ENCODE measurements at regions of chr19 and their contacts with region 1.

Region 1: GRCh38 chr19:10288662-10289166 is 1.0 kb upstream of the ICAM5 start:
- DNase-seq: peak; percentile 75 to 85
- ATAC-seq: peak; percentile 62 to 76; a peak in 5 of 6 replicates
- H3K4me3 ChIP-seq: peak overlapping the region; percentile 52
- H3K27ac ChIP-seq: peak overlapping the region; percentile 48 to 81
- H3K4me1 ChIP-seq: peaks cover 16% of the 10 kb centered on the region
- CTCF ChIP-seq: no peak
- EP300 ChIP-seq: no peak
- POLR2A ChIP-seq: no peak
- RAD21 ChIP-seq: no peak

Region 2: DNA sequence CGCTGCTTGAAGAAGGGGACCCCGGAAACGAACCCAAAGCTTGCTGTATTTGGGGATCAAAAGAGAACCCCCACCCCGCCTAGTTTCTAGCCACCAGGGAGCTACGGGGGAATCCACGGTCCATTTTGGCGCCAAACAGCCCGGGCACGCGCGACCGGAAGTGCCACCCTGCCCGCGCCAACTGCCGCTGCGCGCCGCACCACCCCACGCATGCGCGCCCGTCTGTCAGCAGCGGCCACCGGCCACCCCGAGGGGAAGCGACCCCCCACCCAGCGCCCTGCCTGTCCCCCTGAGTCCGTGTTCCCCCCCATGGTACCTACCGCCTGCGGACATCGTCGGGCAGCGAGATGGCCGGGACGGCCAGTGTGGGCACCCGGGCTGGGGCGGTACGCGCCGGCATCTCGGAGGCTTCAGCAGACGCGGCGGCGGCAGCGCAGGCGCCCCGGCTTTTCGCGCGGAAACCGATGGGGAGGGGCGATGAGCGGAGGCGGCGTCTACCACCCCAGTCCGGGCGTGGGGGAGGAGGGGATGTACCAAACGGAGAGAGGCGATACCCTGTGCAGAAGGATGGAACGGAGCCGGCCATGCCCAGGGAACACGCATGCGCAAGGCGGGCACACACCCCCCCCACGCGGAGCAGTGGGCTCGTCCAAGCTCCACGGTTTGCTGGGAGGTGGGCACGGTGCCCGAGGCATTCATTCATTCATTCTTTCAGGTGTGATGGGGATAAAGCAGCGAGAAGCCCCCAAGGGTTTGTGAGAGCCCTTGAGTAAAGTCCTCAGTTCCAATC is 94.0 kb before region 1 on chr19 and contains the start of gene DNMT1:
- CTCF ChIA-PET with region 1: no interaction called
- POLR2A ChIA-PET with region 1: no interaction called
- DNase-seq: peak; percentile 96 to 99
- ATAC-seq: peak; percentile 97
- H3K4me3 ChIP-seq: peak within 1 kb of the TSS; percentile 84
- H3K27ac ChIP-seq: peak within 1 kb of the TSS; percentile 86 to 100
- H3K4me1 ChIP-seq: peaks cover 16% of the 10 kb centered on the region
- CTCF ChIP-seq: no peak
- EP300 ChIP-seq: no peak
- POLR2A ChIP-seq: peak; percentile 65
- RAD21 ChIP-seq: no peak
- polyA plus RNA-seq, gene DNMT1: 85.2 and 86.2 TPM in 2 replicates

Region 3: DNA sequence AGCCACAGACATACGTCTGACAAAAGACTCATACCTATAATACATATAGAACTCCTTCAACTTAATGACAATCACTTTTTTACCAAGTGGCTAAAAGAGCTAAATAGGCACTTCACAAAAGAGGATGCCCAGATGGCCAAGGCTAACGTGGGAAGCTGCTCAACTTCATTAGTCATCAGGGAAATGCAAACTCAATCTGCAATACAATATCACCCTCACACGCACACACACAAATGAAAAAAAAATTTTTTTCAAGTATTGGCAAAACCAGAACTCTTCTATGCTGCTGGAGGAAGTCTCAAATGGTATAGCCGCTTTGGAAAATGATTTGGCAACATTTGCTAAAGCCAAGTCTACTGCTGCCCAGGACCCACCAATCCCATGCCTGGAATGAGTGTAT is 79.4 kb before region 1 on chr19:
- CTCF ChIA-PET with region 1: no interaction called
- POLR2A ChIA-PET with region 1: no interaction called
- DNase-seq: no peak
- ATAC-seq: no peak
- H3K4me3 ChIP-seq: no peak overlapping the region
- H3K27ac ChIP-seq: no peak overlapping the region
- H3K4me1 ChIP-seq: no peaks in the 10 kb centered on the region
- CTCF ChIP-seq: no peak
- EP300 ChIP-seq: no peak
- POLR2A ChIP-seq: no peak
- RAD21 ChIP-seq: no peak

Region 4: DNA sequence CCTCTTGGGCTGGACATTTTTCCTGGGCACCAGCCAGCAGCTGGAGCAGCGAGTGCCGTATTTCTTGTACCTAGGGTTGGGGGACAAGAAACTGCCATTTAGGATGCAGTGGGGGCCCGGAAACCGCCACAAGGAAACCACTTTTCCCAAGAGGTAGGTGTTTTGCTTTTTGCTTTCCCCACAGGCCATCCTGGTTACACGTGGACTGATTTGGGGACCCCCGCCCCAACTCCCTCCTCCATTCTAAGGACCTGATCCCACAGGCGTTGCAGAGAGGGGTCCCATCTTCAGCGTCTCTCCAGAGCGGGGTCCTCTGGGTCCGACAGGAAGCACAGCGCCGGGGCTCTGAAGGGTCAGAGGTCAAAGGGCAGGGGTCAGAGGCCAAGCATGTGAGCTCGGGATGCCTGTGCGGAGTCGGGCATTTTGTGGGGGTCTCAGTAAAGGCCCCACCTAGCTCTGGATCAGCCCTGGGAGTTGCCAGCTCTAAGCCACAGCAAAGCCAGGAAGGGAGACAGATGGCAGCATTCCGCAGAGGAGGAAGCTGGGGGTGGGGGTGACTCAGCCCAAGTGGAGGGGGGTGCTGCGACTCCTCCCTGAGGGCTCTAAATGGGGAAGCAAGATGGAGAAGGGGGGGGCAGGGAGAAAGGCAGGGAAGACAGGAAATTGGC is 16.6 kb after region 1 on chr19:
- CTCF ChIA-PET with region 1: interaction called, 3 read pairs
- POLR2A ChIA-PET with region 1: interaction called, 10 read pairs
- DNase-seq: no peak
- ATAC-seq: no peak
- H3K4me3 ChIP-seq: no peak overlapping the region
- H3K27ac ChIP-seq: no peak overlapping the region
- H3K4me1 ChIP-seq: no peaks in the 10 kb centered on the region
- CTCF ChIP-seq: no peak
- EP300 ChIP-seq: no peak
- POLR2A ChIP-seq: no peak
- RAD21 ChIP-seq: no peak

Region 5: DNA sequence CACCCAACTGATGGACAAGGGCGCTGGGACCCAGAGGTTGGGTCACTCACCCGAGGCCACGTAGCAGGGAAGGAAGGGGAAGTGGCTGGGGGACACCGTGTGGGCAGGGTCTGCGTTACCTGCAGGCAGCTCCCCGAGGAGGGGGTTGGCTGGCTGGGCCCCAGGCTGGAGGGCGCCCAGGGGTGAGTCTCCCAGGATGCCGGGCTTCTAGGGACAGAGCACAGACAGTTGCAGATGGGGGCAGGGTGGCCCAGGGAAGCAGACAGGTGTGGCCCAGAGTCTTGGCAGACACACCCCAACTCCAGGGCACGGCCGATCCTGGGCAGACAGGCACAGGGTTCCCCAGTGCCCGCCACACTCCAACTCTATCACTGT is 32.7 kb after region 1 on chr19:
- CTCF ChIA-PET with region 1: no interaction called
- POLR2A ChIA-PET with region 1: no interaction called
- DNase-seq: no peak
- ATAC-seq: peak; percentile 11 to 19; a peak in 3 of 6 replicates
- H3K4me3 ChIP-seq: no peak overlapping the region
- H3K27ac ChIP-seq: no peak overlapping the region
- H3K4me1 ChIP-seq: peaks cover 2% of the 10 kb centered on the region; the same call in 1 of the 3 replicates
- CTCF ChIP-seq: no peak
- EP300 ChIP-seq: no peak
- POLR2A ChIP-seq: no peak
- RAD21 ChIP-seq: no peak

Region 6: GRCh38 chr19:10593820-10594637 is 305.3 kb after region 1 on chr19:
- CTCF ChIA-PET with region 1: no interaction called
- POLR2A ChIA-PET with region 1: no interaction called
- DNase-seq: no peak
- ATAC-seq: no peak; a peak in 1 of 6 replicates
- H3K4me3 ChIP-seq: no peak overlapping the region
- H3K27ac ChIP-seq: no peak overlapping the region
- H3K4me1 ChIP-seq: no peaks in the 10 kb centered on the region
- CTCF ChIP-seq: no peak
- EP300 ChIP-seq: no peak
- POLR2A ChIP-seq: no peak
- RAD21 ChIP-seq: no peak